ENCODE measurements at regions of chr5 and their contacts with region 1.

Region 1: DNA sequence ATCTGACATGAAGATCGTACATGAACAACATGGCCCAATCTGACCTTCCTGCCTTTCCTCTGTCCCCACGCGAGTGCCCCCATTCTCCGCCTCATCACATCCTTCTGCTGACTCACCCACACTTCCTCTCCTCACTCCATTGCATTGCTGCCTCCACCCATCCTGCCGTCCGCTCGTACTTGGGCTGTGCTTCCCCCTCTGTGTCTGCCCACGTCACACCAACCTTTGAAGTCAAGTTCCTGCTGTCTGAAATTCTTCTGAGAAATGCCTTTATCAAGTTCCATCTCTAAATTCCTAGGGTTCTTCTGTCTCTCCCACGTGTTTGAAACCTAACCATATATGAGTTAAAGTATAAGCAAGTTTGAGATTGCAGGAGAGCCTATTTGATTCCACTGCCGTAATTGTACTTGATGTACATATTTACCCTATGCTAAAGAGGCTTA is 18.0 kb upstream of the STARD4 start:
- DNase-seq: peak; percentile 70 to 94
- ATAC-seq: peak; percentile 99 to 100 (median 100)
- H3K4me3 ChIP-seq: peak overlapping the region; percentile 1
- H3K4me3 Mint-ChIP-seq: peak overlapping the region; percentile 71
- H3K27ac ChIP-seq: peak overlapping the region; percentile 72
- H3K27ac Mint-ChIP-seq: peak overlapping the region; percentile 84 to 91
- H3K4me1 ChIP-seq: peaks cover 10% of the 10 kb centered on the region
- H3K4me1 Mint-ChIP-seq: peaks cover 14 to 15% of the 10 kb centered on the region in 2 donors
- H3K27me3 ChIP-seq: no peaks in the 10 kb centered on the region
- H3K27me3 Mint-ChIP-seq: peaks cover 0 to 3% of the 10 kb centered on the region in 2 donors
- CTCF ChIP-seq: no peak

Region 2: GRCh38 chr5:111353035-111353434 is 177.3 kb before region 1 on chr5:
- intact Hi-C with region 1: no loop called
- DNase-seq: no peak
- ATAC-seq: no peak
- H3K4me3 ChIP-seq: no peak overlapping the region
- H3K4me3 Mint-ChIP-seq: no peak overlapping the region
- H3K27ac ChIP-seq: no peak overlapping the region
- H3K27ac Mint-ChIP-seq: no peak overlapping the region
- H3K4me1 ChIP-seq: no peaks in the 10 kb centered on the region
- H3K4me1 Mint-ChIP-seq: no peaks in the 10 kb centered on the region
- H3K27me3 ChIP-seq: no peaks in the 10 kb centered on the region
- H3K27me3 Mint-ChIP-seq: no peaks in the 10 kb centered on the region
- CTCF ChIP-seq: no peak

Region 3: GRCh38 chr5:111472579-111472978 is 57.7 kb before region 1 on chr5:
- intact Hi-C with region 1: no loop called
- DNase-seq: no peak
- ATAC-seq: no peak
- H3K4me3 ChIP-seq: no peak overlapping the region
- H3K4me3 Mint-ChIP-seq: no peak overlapping the region
- H3K27ac ChIP-seq: no peak overlapping the region
- H3K27ac Mint-ChIP-seq: no peak overlapping the region
- H3K4me1 ChIP-seq: no peaks in the 10 kb centered on the region
- H3K4me1 Mint-ChIP-seq: no peaks in the 10 kb centered on the region
- H3K27me3 ChIP-seq: no peaks in the 10 kb centered on the region
- H3K27me3 Mint-ChIP-seq: peaks cover 6 to 7% of the 10 kb centered on the region in 2 donors
- CTCF ChIP-seq: no peak

Region 4: DNA sequence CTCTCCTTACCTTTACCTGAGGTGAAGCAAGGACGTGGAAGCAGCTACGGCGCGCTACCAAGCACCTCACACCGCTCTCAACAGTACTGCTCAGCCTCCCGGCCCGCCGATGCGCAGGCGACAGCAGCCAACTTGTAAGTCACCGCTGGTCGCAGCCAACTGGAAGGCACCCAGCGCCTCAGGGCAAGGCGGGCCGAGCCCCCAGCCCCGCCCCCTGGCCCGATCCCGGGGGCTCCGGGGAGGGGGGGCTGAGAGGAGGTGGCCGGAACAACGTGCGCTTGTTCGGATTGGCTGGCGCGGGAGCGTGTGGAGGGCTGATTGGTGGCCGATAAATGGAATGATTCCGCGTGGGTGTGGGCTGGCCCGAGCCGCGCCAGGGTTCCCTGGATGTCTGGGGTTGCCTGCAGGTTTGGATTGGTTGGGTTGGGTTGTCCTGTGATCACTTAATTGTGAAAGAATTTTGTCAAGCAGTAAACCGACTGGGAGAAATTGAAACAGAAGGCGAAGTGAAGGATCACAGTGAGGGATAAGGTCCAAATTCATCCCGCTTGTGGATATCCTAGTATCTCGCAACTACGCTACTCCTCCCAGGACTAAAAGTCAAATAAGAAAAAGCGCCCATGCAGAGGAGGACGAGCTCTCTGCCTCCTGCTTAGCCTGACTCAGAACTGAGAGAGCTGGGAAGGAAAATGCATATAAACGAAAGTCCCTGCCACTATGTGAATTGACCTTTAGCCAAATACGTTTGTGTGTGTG is 17.8 kb before region 1 on chr5 and contains the start of gene STARD4:
- intact Hi-C with region 1: loop called (anchors 1 kb)
- DNase-seq: peak; percentile 94 to 97
- ATAC-seq: peak; percentile 94 to 99 (median 95)
- H3K4me3 ChIP-seq: peak within 1 kb of the TSS; percentile 98
- H3K4me3 Mint-ChIP-seq: peak within 1 kb of the TSS; percentile 98
- H3K27ac ChIP-seq: peak within 1 kb of the TSS; percentile 92
- H3K27ac Mint-ChIP-seq: peak within 1 kb of the TSS; percentile 90 to 97
- H3K4me1 ChIP-seq: peaks cover 10% of the 10 kb centered on the region
- H3K4me1 Mint-ChIP-seq: peaks cover 56 to 63% of the 10 kb centered on the region in 2 donors
- H3K27me3 ChIP-seq: no peaks in the 10 kb centered on the region
- H3K27me3 Mint-ChIP-seq: no peaks in the 10 kb centered on the region
- CTCF ChIP-seq: no peak
- total RNA-seq, gene STARD4: 53.3 to 90.2 (median 53.6) TPM

Region 5: DNA sequence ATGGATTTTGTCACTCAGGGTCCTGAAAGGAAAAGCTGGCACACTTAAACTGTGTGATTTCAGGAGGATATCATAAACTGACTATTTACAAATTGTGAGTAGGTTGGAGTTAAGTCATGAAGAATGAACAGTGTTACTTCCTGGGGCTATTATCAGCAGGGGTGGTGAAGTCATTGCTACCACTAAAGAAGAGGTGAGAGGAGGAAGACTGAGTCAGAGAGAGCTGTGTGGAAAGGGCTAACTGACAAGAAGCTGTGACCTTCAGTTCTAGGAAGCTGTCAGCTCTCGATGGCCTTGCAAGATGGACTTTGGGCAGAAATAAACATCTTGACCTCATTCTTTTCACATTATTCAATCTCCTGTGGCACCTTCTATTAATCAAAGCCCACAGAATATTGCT is 54.3 kb after region 1 on chr5:
- intact Hi-C with region 1: loop called (anchors 10 kb)
- DNase-seq: peak in 1 of 2 donors; percentile 8
- ATAC-seq: peak; percentile 92 to 99 (median 96)
- H3K4me3 ChIP-seq: no peak overlapping the region
- H3K4me3 Mint-ChIP-seq: peak overlapping the region; percentile 65
- H3K27ac ChIP-seq: peak overlapping the region; percentile 75
- H3K27ac Mint-ChIP-seq: peak overlapping the region; percentile 84 to 90
- H3K4me1 ChIP-seq: peaks cover 12% of the 10 kb centered on the region
- H3K4me1 Mint-ChIP-seq: peaks cover 52 to 58% of the 10 kb centered on the region in 2 donors
- H3K27me3 ChIP-seq: no peaks in the 10 kb centered on the region
- H3K27me3 Mint-ChIP-seq: no peaks in the 10 kb centered on the region
- CTCF ChIP-seq: no peak